ENCODE measurements at regions of chr15 and their contacts with region 1.

Region 1: DNA sequence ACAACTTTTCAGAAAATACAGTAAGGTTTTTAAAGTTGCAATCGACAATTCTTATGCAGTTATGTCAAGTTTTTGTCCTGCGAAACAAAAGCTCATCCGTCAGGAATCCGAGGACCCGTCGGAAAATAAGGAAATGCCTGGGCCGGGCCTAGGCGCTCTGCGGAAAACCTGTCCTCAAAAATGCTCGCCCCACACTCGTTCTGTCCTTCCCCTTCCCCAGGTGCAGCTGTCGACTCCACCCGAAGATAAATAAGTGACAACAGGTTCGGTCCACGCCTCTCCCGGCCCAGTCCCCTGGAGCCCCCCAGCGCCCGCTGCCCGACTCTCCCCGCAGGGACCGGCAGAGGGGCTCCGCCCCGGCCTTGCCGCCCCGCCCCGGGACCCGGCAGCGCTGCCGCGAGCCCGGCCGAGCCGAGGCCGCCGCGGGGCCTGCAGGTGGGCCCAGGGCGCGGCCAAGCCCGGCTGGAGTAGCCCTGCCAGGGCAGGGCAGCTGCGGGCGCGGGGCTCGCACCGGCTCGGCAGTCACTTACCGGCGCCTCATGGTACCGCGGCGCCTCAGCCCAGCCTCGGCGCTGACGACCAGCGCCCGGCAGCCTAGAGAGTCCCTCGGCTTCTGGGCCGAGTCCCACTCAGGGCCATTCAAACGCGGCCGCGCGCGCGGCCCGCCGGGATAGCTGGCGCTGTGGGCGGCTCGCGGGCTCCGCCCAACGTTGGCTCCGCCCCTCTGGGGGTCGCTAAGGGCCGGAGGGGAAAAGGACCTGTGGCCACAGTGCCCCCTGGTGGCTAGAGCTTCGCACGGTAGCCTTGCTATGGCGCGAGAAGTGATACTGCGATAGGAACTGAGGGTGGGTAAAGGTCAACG is at the start of gene KATNBL1:
- DNase-seq: peak; percentile 94 to 98
- ATAC-seq: peak; percentile 94 to 99 (median 96)
- H3K4me3 ChIP-seq: peak within 1 kb of the TSS; percentile 58
- H3K4me3 Mint-ChIP-seq: peak within 1 kb of the TSS; percentile 74
- H3K27ac ChIP-seq: peak within 1 kb of the TSS; percentile 63
- H3K27ac Mint-ChIP-seq: peak within 1 kb of the TSS; percentile 51 to 66
- H3K4me1 ChIP-seq: peaks cover 6% of the 10 kb centered on the region
- H3K4me1 Mint-ChIP-seq: peaks cover 18 to 25% of the 10 kb centered on the region in 2 donors
- H3K27me3 ChIP-seq: no peaks in the 10 kb centered on the region
- H3K27me3 Mint-ChIP-seq: no peaks in the 10 kb centered on the region
- CTCF ChIP-seq: peak; percentile 74
- total RNA-seq, gene KATNBL1: 24.0 to 33.8 (median 26.1) TPM

Region 2: DNA sequence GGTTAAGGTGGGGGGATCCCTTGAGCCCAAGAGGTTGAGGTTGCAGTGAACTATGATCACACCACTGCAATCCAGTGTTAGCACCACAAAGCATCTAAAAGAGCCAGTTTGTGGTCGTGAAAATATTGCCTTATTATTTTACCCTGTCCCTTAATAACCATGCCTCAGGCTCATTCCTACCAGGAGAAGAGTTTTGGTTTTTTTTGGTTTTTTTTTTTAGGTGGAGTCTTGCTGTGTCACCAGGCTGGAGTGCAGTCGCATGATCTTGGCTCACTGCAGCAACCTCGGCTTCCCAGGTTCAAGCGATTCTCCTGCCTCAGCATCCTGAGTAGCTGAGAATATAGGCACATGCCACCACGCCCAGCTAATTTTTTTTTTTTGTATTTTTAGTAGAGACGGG is 152.7 kb before region 1 on chr15:
- intact Hi-C with region 1: loop called (anchors 1 kb)
- DNase-seq: no peak
- ATAC-seq: no peak
- H3K4me3 ChIP-seq: no peak overlapping the region
- H3K4me3 Mint-ChIP-seq: no peak overlapping the region
- H3K27ac ChIP-seq: no peak overlapping the region
- H3K27ac Mint-ChIP-seq: no peak overlapping the region
- H3K4me1 ChIP-seq: no peaks in the 10 kb centered on the region
- H3K4me1 Mint-ChIP-seq: peaks cover 3 to 4% of the 10 kb centered on the region in 2 donors
- H3K27me3 ChIP-seq: no peaks in the 10 kb centered on the region
- H3K27me3 Mint-ChIP-seq: no peaks in the 10 kb centered on the region
- CTCF ChIP-seq: no peak

Region 3: GRCh38 chr15:34223904-34224596 is 14.4 kb after region 1 on chr15:
- intact Hi-C with region 1: loop called (anchors 1 kb)
- DNase-seq: peak in 1 of 2 donors; percentile 31
- ATAC-seq: no peak
- H3K4me3 ChIP-seq: peak overlapping the region; percentile 67
- H3K4me3 Mint-ChIP-seq: peak overlapping the region; percentile 95
- H3K27ac ChIP-seq: peak overlapping the region; percentile 83
- H3K27ac Mint-ChIP-seq: peak overlapping the region; percentile 98 to 99
- H3K4me1 ChIP-seq: peaks cover 15% of the 10 kb centered on the region
- H3K4me1 Mint-ChIP-seq: peaks cover 23 to 29% of the 10 kb centered on the region in 2 donors
- H3K27me3 ChIP-seq: no peaks in the 10 kb centered on the region
- H3K27me3 Mint-ChIP-seq: no peaks in the 10 kb centered on the region
- CTCF ChIP-seq: no peak

Measured in natural killer cell (primary cell).